PC-3 (cell line): ENCODE measurements at regions of chr6 and their contacts with region 1.

Region 1: DNA sequence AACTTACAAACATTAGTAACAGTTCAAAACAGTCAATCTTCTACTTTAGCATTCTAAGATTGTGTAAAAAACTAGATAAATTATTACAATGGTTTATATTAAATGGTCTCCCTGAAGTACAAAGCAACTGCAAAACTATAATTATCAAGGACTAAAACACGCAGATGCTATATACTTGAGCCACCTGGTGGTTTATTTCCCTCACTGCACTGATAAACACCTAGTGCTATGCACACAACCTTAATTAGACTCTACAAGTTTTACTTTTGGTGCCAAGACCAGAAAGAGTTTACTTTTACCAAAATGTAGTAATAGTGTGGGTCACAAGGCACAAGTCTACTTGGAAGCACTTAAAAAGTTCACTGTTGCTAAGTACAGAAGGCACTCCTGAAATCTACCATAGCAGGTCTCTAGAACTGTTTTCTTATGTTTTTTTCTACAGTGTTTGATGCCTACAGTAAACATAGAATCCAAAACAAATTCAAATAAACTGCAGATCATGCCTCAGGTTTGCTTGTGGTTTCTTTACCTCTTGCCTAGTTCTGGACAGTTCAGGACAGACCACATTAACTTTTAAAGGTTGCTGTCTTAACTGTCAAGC is 49.2 kb downstream of the GMDS start:
- DNase-seq: peak; percentile 76
- ATAC-seq: peak; percentile 43
- H3K4me3 ChIP-seq: no peak overlapping the region
- H3K27ac ChIP-seq: no peak overlapping the region; the same call in 1 of the 2 replicates
- H3K4me1 ChIP-seq: peaks cover 21% of the 10 kb centered on the region
- H3K27me3 ChIP-seq: no peaks in the 10 kb centered on the region
- CTCF ChIP-seq: peak; percentile 89

Region 2: GRCh38 chr6:1604158-1605030 is 591.8 kb before region 1 on chr6:
- CTCF ChIA-PET with region 1: no interaction called
- POLR2A ChIA-PET with region 1: no interaction called
- intact Hi-C with region 1: loop called (anchors 2 kb)
- DNase-seq: peak; percentile 89
- ATAC-seq: peak; percentile 95
- H3K4me3 ChIP-seq: peak overlapping the region; percentile 76
- H3K27ac ChIP-seq: no peak overlapping the region
- H3K4me1 ChIP-seq: peaks cover 13% of the 10 kb centered on the region; the same call in 1 of the 2 replicates
- H3K27me3 ChIP-seq: no peaks in the 10 kb centered on the region
- CTCF ChIP-seq: peak; percentile 89

Region 3: GRCh38 chr6:1770968-1771723 is 425.0 kb before region 1 on chr6:
- CTCF ChIA-PET with region 1: no interaction called
- POLR2A ChIA-PET with region 1: no interaction called
- intact Hi-C with region 1: no loop called
- DNase-seq: peak; percentile 88
- ATAC-seq: peak; percentile 81
- H3K4me3 ChIP-seq: no peak overlapping the region
- H3K27ac ChIP-seq: peak overlapping the region; percentile 77
- H3K4me1 ChIP-seq: peaks cover 49% of the 10 kb centered on the region
- H3K27me3 ChIP-seq: no peaks in the 10 kb centered on the region
- CTCF ChIP-seq: no peak

Region 4: DNA sequence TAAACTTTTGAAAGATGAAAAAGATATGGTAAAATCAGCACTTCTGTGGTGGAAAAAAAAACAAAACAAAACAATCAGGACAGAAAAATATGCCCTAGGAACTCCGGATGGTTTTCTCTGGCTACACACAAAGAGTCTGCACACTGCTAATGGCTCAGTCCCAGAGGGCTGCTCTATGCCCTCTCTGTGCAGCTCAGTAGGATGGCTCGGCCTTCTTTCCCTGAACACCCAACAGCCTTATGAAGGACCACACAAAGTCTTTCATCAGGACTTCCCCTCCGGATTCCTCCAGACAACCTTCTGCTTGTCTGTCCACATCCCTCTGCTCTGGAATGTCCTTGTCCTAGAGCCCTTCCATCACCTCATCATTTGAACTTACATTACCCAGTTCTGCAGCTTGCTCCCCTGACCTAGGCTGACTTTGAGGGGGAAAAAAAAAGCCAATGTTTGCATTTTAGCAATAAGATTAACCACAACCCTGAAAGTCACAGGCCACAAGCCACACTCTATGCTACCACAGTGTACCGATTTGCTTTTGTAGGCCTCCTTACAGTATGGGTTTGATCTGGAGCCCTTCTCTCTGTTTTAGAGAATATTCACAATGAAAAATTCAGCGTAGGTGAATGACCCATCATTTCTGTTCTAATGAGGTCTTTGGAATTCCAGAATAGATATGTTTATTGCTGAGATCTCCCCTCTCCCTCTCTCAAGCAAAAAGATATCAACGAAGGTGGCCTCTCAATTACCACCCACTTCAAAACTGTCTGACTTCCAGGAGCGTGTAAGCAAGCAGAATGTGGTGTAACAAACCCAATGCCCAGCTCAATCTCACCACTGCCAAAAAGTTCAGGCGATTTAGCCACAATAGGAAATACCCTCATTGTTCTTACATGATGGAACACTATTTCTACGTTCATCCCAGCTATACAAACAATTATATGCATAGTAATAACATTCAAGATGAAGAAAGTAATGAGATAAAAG is 114.7 kb before region 1 on chr6:
- CTCF ChIA-PET with region 1: no interaction called
- POLR2A ChIA-PET with region 1: no interaction called
- intact Hi-C with region 1: no loop called
- DNase-seq: no peak
- ATAC-seq: no peak
- H3K4me3 ChIP-seq: no peak overlapping the region
- H3K27ac ChIP-seq: no peak overlapping the region
- H3K4me1 ChIP-seq: peaks cover 5% of the 10 kb centered on the region; the same call in 1 of the 2 replicates
- H3K27me3 ChIP-seq: no peaks in the 10 kb centered on the region
- CTCF ChIP-seq: no peak

Region 5: GRCh38 chr6:2363211-2363610 is 167.0 kb after region 1 on chr6:
- CTCF ChIA-PET with region 1: no interaction called
- POLR2A ChIA-PET with region 1: no interaction called
- intact Hi-C with region 1: no loop called
- DNase-seq: no peak
- ATAC-seq: no peak
- H3K4me3 ChIP-seq: no peak overlapping the region
- H3K27ac ChIP-seq: no peak overlapping the region
- H3K4me1 ChIP-seq: no peaks in the 10 kb centered on the region
- H3K27me3 ChIP-seq: no peaks in the 10 kb centered on the region
- CTCF ChIP-seq: no peak